ENCODE measurements at regions of chrX and their contacts with region 1.

Region 1: GRCh38 chrX:116204932-116205331 is 34.4 kb downstream of the AGTR2 start:
- DNase-seq: peak in 1 of 2 experiments; percentile 24
- H3K4me3 ChIP-seq: no peak overlapping the region
- H3K4me3 Mint-ChIP-seq: no peak overlapping the region
- H3K27ac Mint-ChIP-seq: no peak overlapping the region
- H3K4me1 ChIP-seq: no peaks in the 10 kb centered on the region
- H3K4me1 Mint-ChIP-seq: no peaks in the 10 kb centered on the region
- H3K27me3 ChIP-seq: no peaks in the 10 kb centered on the region
- H3K27me3 Mint-ChIP-seq: no peaks in the 10 kb centered on the region
- CTCF ChIP-seq: peak; percentile 49 to 56

Region 2: GRCh38 chrX:115957862-115958483 is 247.0 kb before region 1 on chrX:
- CTCF ChIA-PET with region 1: no interaction called
- POLR2A ChIA-PET with region 1: no interaction called
- intact Hi-C with region 1: loop called (anchors 1 kb)
- DNase-seq: peak in 1 of 2 experiments; percentile 35
- H3K4me3 ChIP-seq: no peak overlapping the region
- H3K4me3 Mint-ChIP-seq: no peak overlapping the region
- H3K27ac Mint-ChIP-seq: no peak overlapping the region
- H3K4me1 ChIP-seq: no peaks in the 10 kb centered on the region
- H3K4me1 Mint-ChIP-seq: peaks cover 6% of the 10 kb centered on the region
- H3K27me3 ChIP-seq: no peaks in the 10 kb centered on the region
- H3K27me3 Mint-ChIP-seq: no peaks in the 10 kb centered on the region
- CTCF ChIP-seq: no peak

Region 3: DNA sequence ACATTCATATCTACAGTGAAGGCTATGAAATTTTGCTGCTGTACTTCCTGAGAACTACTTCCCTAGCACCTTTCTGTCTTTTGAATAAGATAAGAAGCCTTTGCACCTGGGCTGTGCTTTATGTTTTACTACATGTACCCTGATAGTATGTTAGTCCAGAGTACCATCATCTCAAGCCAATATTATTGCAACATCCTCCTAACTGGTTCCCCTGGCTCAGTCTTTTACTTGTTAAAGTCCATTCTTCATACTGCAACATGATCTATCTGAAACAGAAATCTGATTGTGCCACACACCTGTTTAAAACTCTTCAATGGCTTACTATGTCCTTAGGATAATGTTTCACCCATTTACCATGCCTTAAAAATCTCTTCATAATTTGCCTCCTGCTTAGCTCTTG is 67.9 kb after region 1 on chrX:
- CTCF ChIA-PET with region 1: no interaction called
- POLR2A ChIA-PET with region 1: no interaction called
- intact Hi-C with region 1: no loop called
- DNase-seq: no peak
- H3K4me3 ChIP-seq: no peak overlapping the region
- H3K4me3 Mint-ChIP-seq: no peak overlapping the region
- H3K27ac Mint-ChIP-seq: peak overlapping the region; percentile 65
- H3K4me1 ChIP-seq: 0 out of 2 replicates have a peak, but pooled peaks cover 2% of the 10 kb centered on the region
- H3K4me1 Mint-ChIP-seq: peaks cover 7% of the 10 kb centered on the region
- H3K27me3 ChIP-seq: no peaks in the 10 kb centered on the region
- H3K27me3 Mint-ChIP-seq: no peaks in the 10 kb centered on the region
- CTCF ChIP-seq: no peak

Region 4: DNA sequence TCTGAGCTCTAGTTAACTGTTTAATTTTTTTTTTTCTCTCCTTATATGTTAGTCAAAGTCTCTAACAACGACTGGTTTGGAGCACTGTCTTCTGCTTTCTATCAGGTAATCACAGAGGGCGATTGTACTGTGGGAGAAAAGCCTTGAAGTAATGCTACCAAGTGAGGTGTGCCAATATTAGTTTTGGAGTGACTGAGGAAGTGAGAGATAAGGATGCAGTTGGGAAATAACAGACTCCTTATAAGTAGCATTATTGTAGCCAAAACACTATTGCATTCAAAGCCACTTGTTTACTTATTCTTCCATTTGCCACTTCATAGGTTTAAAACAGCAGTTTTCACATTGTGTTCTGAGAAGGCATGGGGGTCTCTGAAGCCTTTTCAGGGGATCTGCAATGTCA is 152.4 kb after region 1 on chrX:
- CTCF ChIA-PET with region 1: no interaction called
- POLR2A ChIA-PET with region 1: no interaction called
- intact Hi-C with region 1: loop called (anchors 10 kb)
- DNase-seq: peak in 1 of 2 experiments; percentile 0
- H3K4me3 ChIP-seq: no peak overlapping the region
- H3K4me3 Mint-ChIP-seq: no peak overlapping the region
- H3K27ac Mint-ChIP-seq: no peak overlapping the region
- H3K4me1 ChIP-seq: no peaks in the 10 kb centered on the region
- H3K4me1 Mint-ChIP-seq: no peaks in the 10 kb centered on the region
- H3K27me3 ChIP-seq: no peaks in the 10 kb centered on the region
- H3K27me3 Mint-ChIP-seq: no peaks in the 10 kb centered on the region
- CTCF ChIP-seq: no peak

Region 5: DNA sequence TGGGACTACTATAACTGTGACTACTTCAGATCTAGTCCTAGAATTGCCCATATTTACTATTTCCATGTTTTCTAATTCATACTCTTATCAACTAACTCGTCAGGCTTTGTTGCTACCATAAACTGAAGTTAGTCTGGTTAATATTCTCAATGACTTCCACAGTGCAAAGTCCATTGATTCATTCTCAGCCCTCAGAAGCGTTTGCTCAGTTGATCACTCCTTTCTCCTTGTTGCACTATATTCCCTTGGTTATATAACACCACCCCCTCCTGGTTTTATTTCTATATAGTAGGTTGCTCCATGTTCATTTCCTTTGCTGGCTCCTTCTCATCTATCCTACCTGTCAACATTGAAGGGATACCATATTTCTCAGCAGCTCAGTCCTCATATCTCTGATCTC is 204.3 kb after region 1 on chrX:
- CTCF ChIA-PET with region 1: no interaction called
- POLR2A ChIA-PET with region 1: no interaction called
- intact Hi-C with region 1: loop called (anchors 5 kb)
- DNase-seq: no peak
- H3K4me3 ChIP-seq: no peak overlapping the region
- H3K4me3 Mint-ChIP-seq: no peak overlapping the region
- H3K27ac Mint-ChIP-seq: peak overlapping the region; percentile 34
- H3K4me1 ChIP-seq: no peaks in the 10 kb centered on the region
- H3K4me1 Mint-ChIP-seq: peaks cover 13% of the 10 kb centered on the region
- H3K27me3 ChIP-seq: no peaks in the 10 kb centered on the region
- H3K27me3 Mint-ChIP-seq: no peaks in the 10 kb centered on the region
- CTCF ChIP-seq: no peak

Region 6: GRCh38 chrX:116449169-116449568 is 244.2 kb after region 1 on chrX:
- CTCF ChIA-PET with region 1: no interaction called
- POLR2A ChIA-PET with region 1: no interaction called
- intact Hi-C with region 1: loop called (anchors 1 kb)
- DNase-seq: no peak
- H3K4me3 ChIP-seq: no peak overlapping the region
- H3K4me3 Mint-ChIP-seq: no peak overlapping the region
- H3K27ac Mint-ChIP-seq: no peak overlapping the region
- H3K4me1 ChIP-seq: no peaks in the 10 kb centered on the region
- H3K4me1 Mint-ChIP-seq: no peaks in the 10 kb centered on the region
- H3K27me3 ChIP-seq: no peaks in the 10 kb centered on the region
- H3K27me3 Mint-ChIP-seq: no peaks in the 10 kb centered on the region
- CTCF ChIP-seq: no peak

Region 7: DNA sequence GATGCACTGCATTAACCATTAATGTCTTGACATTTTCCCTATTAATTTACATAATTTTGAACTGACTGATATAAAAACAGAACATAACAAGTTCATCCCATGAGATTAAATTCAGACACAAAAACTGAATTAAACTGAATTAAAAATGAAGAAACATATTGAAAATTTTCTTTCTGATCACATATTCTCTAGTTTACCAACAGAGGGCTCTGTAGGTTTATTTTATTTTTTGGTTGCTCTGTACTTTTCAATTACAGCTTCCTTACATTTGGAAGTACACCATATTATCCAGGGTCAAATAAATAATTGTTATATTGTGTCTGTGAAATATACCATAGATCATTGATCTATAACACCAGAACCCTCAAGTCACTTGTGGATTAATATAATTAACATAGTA is 285.2 kb after region 1 on chrX:
- CTCF ChIA-PET with region 1: no interaction called
- POLR2A ChIA-PET with region 1: no interaction called
- intact Hi-C with region 1: loop called (anchors 5 kb)
- DNase-seq: no peak
- H3K4me3 ChIP-seq: no peak overlapping the region
- H3K4me3 Mint-ChIP-seq: no peak overlapping the region
- H3K27ac Mint-ChIP-seq: no peak overlapping the region
- H3K4me1 ChIP-seq: no peaks in the 10 kb centered on the region
- H3K4me1 Mint-ChIP-seq: no peaks in the 10 kb centered on the region
- H3K27me3 ChIP-seq: no peaks in the 10 kb centered on the region
- H3K27me3 Mint-ChIP-seq: no peaks in the 10 kb centered on the region
- CTCF ChIP-seq: peak in 1 of 2 experiments; percentile 2

Region 8: DNA sequence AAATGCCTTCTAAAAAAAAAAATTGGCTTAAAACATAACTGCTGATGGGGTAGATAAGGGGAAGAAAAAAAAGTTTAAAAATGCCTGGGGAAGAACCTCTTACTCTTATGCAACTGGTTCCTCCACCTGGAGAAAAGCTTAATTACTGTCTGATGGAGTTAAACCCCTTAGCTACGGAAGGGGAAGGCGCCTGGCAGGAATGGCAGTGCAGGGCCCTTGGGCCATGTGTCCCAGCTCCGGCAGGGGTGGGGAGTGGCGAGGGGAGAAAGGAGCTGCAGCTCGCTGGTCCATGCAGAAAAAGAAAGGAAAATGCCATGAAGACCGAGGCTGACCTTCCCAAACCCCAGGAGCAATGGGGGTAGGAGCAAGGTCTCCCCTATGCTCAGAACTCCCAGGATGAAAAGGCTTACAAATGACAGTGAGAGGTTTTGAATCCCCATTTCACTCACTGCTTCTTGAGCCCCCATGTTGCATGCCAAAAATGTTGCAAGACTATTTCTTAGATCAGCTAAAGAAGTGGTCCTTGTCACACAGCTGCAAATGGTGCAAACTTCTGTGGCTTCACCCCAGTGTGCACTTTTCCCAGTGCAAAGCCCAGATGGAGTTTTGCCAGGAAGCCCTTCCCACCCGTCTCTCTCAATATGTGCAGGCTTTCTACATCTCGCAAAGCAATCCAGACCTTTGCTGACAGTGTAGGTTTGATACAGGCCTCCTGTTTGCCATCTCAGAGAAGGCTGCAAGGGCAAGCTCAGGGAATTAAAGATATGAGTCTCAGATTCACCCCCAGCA is 462.6 kb after region 1 on chrX:
- CTCF ChIA-PET with region 1: no interaction called
- POLR2A ChIA-PET with region 1: no interaction called
- intact Hi-C with region 1: loop called (anchors 10 kb)
- DNase-seq: no peak
- H3K4me3 ChIP-seq: no peak overlapping the region
- H3K4me3 Mint-ChIP-seq: no peak overlapping the region
- H3K27ac Mint-ChIP-seq: no peak overlapping the region
- H3K4me1 ChIP-seq: no peaks in the 10 kb centered on the region
- H3K4me1 Mint-ChIP-seq: no peaks in the 10 kb centered on the region
- H3K27me3 ChIP-seq: no peaks in the 10 kb centered on the region
- H3K27me3 Mint-ChIP-seq: no peaks in the 10 kb centered on the region
- CTCF ChIP-seq: no peak

Measured in Caco-2 (cell line).